CD4-positive, alpha-beta memory T cell (primary cell): ENCODE measurements at regions of chr6 and their contacts with region 1.

Region 1: DNA sequence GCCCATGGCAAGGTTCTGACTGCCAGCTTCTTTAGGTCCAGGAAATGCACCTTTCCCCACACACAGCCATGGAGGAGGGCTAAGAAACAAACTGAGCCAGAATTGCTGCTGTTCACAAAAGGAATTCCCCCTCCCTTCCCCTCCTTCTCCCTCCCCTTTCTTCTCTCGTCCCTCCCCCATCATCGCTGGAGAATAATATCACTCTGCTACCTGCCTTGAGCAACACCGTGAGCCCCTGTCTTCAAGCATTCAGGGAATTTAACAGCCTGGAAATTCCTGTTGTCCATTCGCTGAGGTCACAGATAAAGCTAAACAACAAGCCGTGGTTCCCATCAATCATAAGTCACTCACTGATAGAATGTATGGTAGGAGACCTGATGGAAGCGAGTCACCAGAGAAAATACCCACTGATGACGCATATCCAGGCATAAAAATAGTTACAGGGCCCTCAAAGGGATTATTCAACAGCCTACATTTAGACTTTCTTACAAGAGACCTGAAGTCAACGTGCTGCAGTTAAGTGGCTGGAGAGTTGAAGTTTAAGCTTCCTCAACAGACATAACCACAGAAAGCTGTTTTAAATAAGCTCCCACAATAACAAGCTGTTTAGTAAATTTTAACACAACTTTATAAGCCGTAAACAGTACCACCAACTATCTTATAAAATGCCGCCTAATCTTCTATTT is 59.7 kb downstream of the HIVEP2 start:
- DNase-seq: peak; percentile 75 to 90 (median 80)
- H3K4me3 ChIP-seq: peak overlapping the region; percentile 54 to 64
- H3K4me3 Mint-ChIP-seq: peak overlapping the region; percentile 90 to 99 (median 94)
- H3K27ac ChIP-seq: peak overlapping the region; percentile 80
- H3K27ac Mint-ChIP-seq: peak overlapping the region; percentile 92 to 100 (median 100)
- H3K4me1 ChIP-seq: peaks cover 100% of the 10 kb centered on the region
- H3K4me1 Mint-ChIP-seq: peaks cover 70 to 98% (median 87%) of the 10 kb centered on the region in 4 donors
- H3K27me3 ChIP-seq: no peaks in the 10 kb centered on the region
- H3K27me3 Mint-ChIP-seq: no peaks in the 10 kb centered on the region

Region 2: DNA sequence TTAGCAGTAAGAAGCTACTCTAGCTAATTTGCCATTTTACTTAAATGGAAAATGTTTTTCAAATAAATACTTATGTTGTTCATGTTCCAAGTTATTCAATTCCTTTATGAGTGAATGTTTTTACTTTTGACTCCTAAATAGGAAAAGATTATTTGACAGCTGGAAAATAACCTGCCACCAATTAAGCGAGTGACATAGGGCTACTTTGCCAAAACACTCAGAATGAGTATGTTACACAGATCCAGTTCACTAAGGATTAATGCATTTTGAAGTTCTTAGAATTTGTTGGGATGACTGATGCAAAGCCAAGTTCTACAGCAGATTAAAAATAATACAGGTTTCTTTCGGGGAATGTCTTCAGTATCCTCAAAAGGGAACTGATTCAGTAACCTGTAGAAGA is 439.2 kb before region 1 on chr6:
- CTCF ChIA-PET with region 1: no interaction called
- POLR2A ChIA-PET with region 1: no interaction called
- intact Hi-C with region 1: no loop called
- DNase-seq: no peak
- H3K4me3 ChIP-seq: no peak overlapping the region
- H3K4me3 Mint-ChIP-seq: no peak overlapping the region
- H3K27ac ChIP-seq: no peak overlapping the region
- H3K27ac Mint-ChIP-seq: no peak overlapping the region
- H3K4me1 ChIP-seq: no peaks in the 10 kb centered on the region
- H3K4me1 Mint-ChIP-seq: no peaks in the 10 kb centered on the region
- H3K27me3 ChIP-seq: no peaks in the 10 kb centered on the region
- H3K27me3 Mint-ChIP-seq: peaks cover 4 to 9% of the 10 kb centered on the region in 2 donors

Region 3: GRCh38 chr6:142746524-142746923 is 138.8 kb before region 1 on chr6:
- CTCF ChIA-PET with region 1: interaction called, 34 read pairs
- POLR2A ChIA-PET with region 1: no interaction called
- intact Hi-C with region 1: loop called (anchors 1 kb)
- DNase-seq: peak in 4 of 5 donors; percentile 29 to 42 (median 34)
- H3K4me3 ChIP-seq: no peak overlapping the region
- H3K4me3 Mint-ChIP-seq: no peak overlapping the region
- H3K27ac ChIP-seq: no peak overlapping the region
- H3K27ac Mint-ChIP-seq: peak overlapping the region in 1 of 7 donors; percentile 16
- H3K4me1 ChIP-seq: peaks cover 5% of the 10 kb centered on the region
- H3K4me1 Mint-ChIP-seq: peaks cover 3 to 11% (median 9%) of the 10 kb centered on the region in 4 donors
- H3K27me3 ChIP-seq: no peaks in the 10 kb centered on the region
- H3K27me3 Mint-ChIP-seq: no peaks in the 10 kb centered on the region

Region 4: GRCh38 chr6:142819603-142820337 is 65.6 kb before region 1 on chr6:
- CTCF ChIA-PET with region 1: interaction called, 4 read pairs
- POLR2A ChIA-PET with region 1: interaction called, 4 read pairs
- intact Hi-C with region 1: loop called (anchors 2 kb)
- DNase-seq: peak; percentile 45 to 84 (median 52)
- H3K4me3 ChIP-seq: peak overlapping the region; percentile 37 to 48
- H3K4me3 Mint-ChIP-seq: peak overlapping the region; percentile 76 to 92 (median 90)
- H3K27ac ChIP-seq: peak overlapping the region; percentile 76
- H3K27ac Mint-ChIP-seq: peak overlapping the region; percentile 87 to 100 (median 94)
- H3K4me1 ChIP-seq: peaks cover 88% of the 10 kb centered on the region
- H3K4me1 Mint-ChIP-seq: peaks cover 62 to 84% (median 71%) of the 10 kb centered on the region in 4 donors
- H3K27me3 ChIP-seq: no peaks in the 10 kb centered on the region
- H3K27me3 Mint-ChIP-seq: peaks cover 0 to 3% of the 10 kb centered on the region in 2 donors

Region 5: GRCh38 chr6:142850679-142851423 is 34.5 kb before region 1 on chr6:
- CTCF ChIA-PET with region 1: interaction called, 11 read pairs
- POLR2A ChIA-PET with region 1: interaction called, 124 read pairs
- intact Hi-C with region 1: no loop called
- DNase-seq: peak in 1 of 5 donors; percentile 76
- H3K4me3 ChIP-seq: no peak overlapping the region
- H3K4me3 Mint-ChIP-seq: peak overlapping the region; percentile 62 to 86 (median 78)
- H3K27ac ChIP-seq: peak overlapping the region; percentile 46
- H3K27ac Mint-ChIP-seq: peak overlapping the region; percentile 88 to 96 (median 94)
- H3K4me1 ChIP-seq: peaks cover 100% of the 10 kb centered on the region
- H3K4me1 Mint-ChIP-seq: peaks cover 83 to 100% (median 92%) of the 10 kb centered on the region in 4 donors
- H3K27me3 ChIP-seq: no peaks in the 10 kb centered on the region
- H3K27me3 Mint-ChIP-seq: no peaks in the 10 kb centered on the region

Region 6: DNA sequence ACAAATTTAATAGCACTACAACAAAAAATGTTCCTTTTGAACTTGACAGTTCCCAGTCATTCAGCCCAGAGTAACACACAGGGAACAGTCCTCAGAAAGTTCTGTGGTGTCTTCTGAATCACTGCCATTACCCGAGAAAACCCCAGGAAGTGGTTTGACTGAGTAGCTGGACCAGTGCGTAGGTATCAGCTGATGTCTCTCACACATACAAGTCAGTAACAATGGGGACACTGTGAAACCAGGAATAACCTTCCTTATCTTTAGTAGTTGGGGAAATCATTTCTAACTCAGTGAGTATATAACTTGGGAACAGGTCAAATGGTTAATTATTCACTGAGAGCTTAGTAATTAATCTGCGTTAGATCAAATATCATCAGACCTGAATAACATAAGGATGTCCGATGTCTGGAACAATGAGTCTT is 13.4 kb before region 1 on chr6:
- CTCF ChIA-PET with region 1: interaction called, 5 read pairs
- POLR2A ChIA-PET with region 1: interaction called, 14 read pairs
- intact Hi-C with region 1: loop called (anchors 1 kb)
- DNase-seq: peak; percentile 64 to 88 (median 71)
- H3K4me3 ChIP-seq: no peak overlapping the region
- H3K4me3 Mint-ChIP-seq: peak overlapping the region; percentile 45 to 77 (median 65)
- H3K27ac ChIP-seq: peak overlapping the region; percentile 65
- H3K27ac Mint-ChIP-seq: peak overlapping the region; percentile 76 to 98 (median 95)
- H3K4me1 ChIP-seq: peaks cover 94% of the 10 kb centered on the region
- H3K4me1 Mint-ChIP-seq: peaks cover 74 to 95% (median 82%) of the 10 kb centered on the region in 4 donors
- H3K27me3 ChIP-seq: no peaks in the 10 kb centered on the region
- H3K27me3 Mint-ChIP-seq: no peaks in the 10 kb centered on the region

Region 7: DNA sequence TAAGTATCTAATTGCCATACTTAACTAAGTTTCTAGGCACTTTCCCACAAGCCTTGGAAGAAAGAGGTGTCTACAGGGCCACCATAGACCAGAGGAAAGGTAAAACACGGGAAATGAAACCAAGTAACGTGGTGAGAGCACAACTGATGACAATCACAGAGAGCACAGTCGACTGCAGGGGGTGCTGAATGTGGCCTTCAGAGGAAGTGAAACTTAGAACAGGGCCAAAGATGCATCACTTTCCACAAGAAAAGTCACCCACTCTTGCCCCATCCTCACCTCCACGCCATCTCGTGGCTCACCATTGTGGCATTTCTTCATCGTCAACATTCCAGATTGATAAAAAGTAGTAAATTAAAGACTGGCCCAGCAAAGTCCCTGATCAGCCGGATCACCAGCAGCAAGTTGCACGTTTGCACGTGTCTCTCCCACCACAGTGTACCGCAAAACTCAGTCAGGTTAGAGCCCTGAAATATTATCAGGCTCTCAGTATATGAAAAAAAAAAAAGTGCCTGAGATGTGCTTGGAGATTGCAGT is 28.3 kb after region 1 on chr6:
- CTCF ChIA-PET with region 1: interaction called, 6 read pairs
- POLR2A ChIA-PET with region 1: interaction called, 3 read pairs
- intact Hi-C with region 1: loop called (anchors 1 kb)
- DNase-seq: peak; percentile 78 to 88 (median 81)
- H3K4me3 ChIP-seq: peak overlapping the region; percentile 14 to 57
- H3K4me3 Mint-ChIP-seq: peak overlapping the region; percentile 84 to 95 (median 88)
- H3K27ac ChIP-seq: peak overlapping the region; percentile 85
- H3K27ac Mint-ChIP-seq: peak overlapping the region in 6 of 7 donors; percentile 98 to 100 (median 99)
- H3K4me1 ChIP-seq: peaks cover 97% of the 10 kb centered on the region
- H3K4me1 Mint-ChIP-seq: peaks cover 71 to 86% (median 80%) of the 10 kb centered on the region in 4 donors
- H3K27me3 ChIP-seq: no peaks in the 10 kb centered on the region
- H3K27me3 Mint-ChIP-seq: no peaks in the 10 kb centered on the region

Region 8: GRCh38 chr6:143090314-143091044 is 205.2 kb after region 1 on chr6:
- CTCF ChIA-PET with region 1: no interaction called
- POLR2A ChIA-PET with region 1: no interaction called
- intact Hi-C with region 1: no loop called
- DNase-seq: peak in 1 of 5 donors; percentile 10
- H3K4me3 ChIP-seq: no peak overlapping the region
- H3K4me3 Mint-ChIP-seq: no peak overlapping the region
- H3K27ac ChIP-seq: no peak overlapping the region
- H3K27ac Mint-ChIP-seq: no peak overlapping the region
- H3K4me1 ChIP-seq: no peaks in the 10 kb centered on the region
- H3K4me1 Mint-ChIP-seq: peaks cover 0 to 4% (median 2%) of the 10 kb centered on the region in 4 donors
- H3K27me3 ChIP-seq: no peaks in the 10 kb centered on the region
- H3K27me3 Mint-ChIP-seq: no peaks in the 10 kb centered on the region